ENCODE measurements at regions of chr11 and their contacts with region 1.

Region 1: GRCh38 chr11:34105079-34105956 is at the start of gene NAT10:
- DNase-seq: peak; percentile 98
- H3K4me3 Mint-ChIP-seq: peak within 1 kb of the TSS; percentile 94
- H3K27ac Mint-ChIP-seq: peak within 1 kb of the TSS; percentile 94
- H3K4me1 Mint-ChIP-seq: peaks cover 51% of the 10 kb centered on the region
- H3K27me3 Mint-ChIP-seq: no peaks in the 10 kb centered on the region
- total RNA-seq, gene NAT10: 91.0 to 93.3 TPM

Region 2: DNA sequence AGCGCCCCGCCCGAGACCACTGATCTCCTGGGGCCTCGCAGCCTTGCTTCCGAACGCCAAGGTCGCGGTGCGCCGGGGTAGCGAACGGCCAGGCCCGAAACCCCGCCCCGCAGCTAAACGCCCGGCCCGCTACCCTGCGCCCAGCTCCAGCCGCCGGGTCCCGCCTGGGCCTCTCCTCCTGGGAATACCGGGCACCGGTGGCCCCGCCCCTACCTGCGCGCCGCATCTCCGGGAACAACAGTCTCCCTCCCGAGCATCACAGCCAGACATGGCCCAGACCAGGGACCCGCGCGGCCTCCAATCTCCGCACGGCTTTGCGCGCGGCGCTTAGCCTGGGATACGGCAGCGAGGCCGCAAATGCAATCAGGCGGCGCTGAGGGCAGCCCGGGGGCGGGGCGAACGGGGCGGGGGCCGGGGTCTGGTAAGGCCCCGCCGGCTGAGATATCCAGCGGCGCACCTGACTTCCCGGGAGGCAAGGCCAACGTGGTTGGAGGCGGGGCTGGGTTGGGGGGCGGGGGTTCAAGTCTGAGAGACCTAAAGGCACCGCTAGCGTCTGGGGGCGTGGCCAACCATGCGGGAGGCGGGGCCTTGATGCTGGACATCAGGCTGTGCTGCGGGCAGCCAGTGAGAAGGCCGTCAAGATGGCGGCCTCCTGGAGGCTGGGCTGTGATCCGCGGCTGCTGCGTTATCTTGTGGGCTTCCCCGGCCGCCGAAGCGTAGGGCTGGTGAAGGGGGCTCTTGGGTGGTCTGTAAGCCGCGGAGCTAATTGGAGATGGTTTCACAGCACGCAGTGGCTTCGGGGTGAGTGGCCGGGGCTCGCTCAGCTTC is 810.9 kb after region 1 on chr11 and contains the starts of genes APIP and PDHX:
- CTCF ChIA-PET with region 1: no interaction called
- intact Hi-C with region 1: loop called (anchors 1 kb)
- DNase-seq: peak; percentile 98
- H3K4me3 Mint-ChIP-seq: peak within 1 kb of the TSS; percentile 99
- H3K27ac Mint-ChIP-seq: peak within 1 kb of the TSS; percentile 96
- H3K4me1 Mint-ChIP-seq: peaks cover 44% of the 10 kb centered on the region
- H3K27me3 Mint-ChIP-seq: no peaks in the 10 kb centered on the region
- total RNA-seq, gene APIP: 42.4 to 42.5 TPM
- total RNA-seq, gene PDHX: 38.2 to 40.9 TPM